Right cardiac atrium (tissue), 5 donors: ENCODE measurements at regions of chr1 and their contacts with region 1.

Region 1: DNA sequence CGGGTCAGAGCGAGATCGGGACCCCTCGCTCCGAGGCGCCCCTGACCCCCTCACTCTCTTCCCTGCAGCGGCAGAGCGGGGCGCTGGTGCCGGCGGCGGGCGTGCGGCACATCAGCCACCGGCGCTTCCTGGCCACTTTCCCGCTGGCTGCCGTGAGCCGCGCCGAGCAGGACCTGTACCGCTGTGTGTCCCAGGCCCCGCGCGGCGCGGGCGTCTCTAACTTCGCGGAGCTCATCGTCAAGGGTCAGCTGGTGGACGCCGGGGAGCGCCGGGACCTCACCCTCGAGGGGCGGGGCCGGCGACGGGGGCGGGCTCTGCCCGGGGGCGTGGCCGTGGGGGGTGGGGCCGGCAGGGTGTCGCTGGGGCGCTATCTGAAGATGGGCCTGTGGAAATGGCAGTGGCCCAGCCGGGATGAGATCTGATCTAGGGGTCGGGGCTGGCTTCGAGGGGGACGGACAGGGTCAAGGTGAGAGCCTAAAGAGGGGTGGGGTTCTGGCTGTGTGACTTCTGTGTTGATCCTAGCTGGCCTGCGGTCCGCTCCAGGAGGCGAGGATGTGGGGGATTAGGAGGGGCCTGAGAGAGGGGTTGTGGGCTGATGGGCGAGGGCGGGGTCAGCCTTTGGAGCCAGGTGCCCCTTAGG is 23.6 kb downstream of the PTPRU start:
- DNase-seq: peak; percentile 69 to 90 (median 89)
- ATAC-seq: peak; percentile 86 to 90
- H3K4me3 ChIP-seq: peak overlapping the region; percentile 37
- H3K27ac ChIP-seq: no peak overlapping the region
- H3K4me1 ChIP-seq: peaks cover 4% of the 10 kb centered on the region
- H3K27me3 ChIP-seq: no peaks in the 10 kb centered on the region

Region 2: DNA sequence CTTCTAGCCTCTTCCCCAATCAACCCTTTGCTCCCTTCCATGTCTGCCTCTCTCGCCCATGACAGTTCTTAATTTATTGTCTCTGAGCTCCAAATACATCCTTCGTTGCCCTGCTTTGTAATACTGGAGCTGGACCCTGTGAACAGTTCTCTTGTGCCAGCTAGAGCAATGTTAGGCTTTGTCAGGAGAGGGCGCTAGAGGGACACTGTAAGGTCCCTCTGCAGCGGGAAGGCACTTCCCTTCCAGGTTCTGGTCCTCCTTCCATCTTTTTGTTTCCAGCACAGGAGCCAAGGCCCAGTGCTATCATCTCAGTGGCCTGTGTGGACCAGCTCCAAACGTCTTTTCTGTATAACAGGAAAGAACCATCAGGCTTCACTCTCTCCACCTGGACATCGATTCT is 72.3 kb after region 1 on chr1:
- intact Hi-C with region 1: loop called in 1 of 4 experiments (anchors 10 kb)
- DNase-seq: no peak
- ATAC-seq: no peak
- H3K4me3 ChIP-seq: no peak overlapping the region
- H3K27ac ChIP-seq: no peak overlapping the region
- H3K4me1 ChIP-seq: no peaks in the 10 kb centered on the region
- H3K27me3 ChIP-seq: no peaks in the 10 kb centered on the region

Region 3: GRCh38 chr1:30106125-30106524 is 846.2 kb after region 1 on chr1:
- intact Hi-C with region 1: loop called in 1 of 4 experiments (anchors 10 kb)
- DNase-seq: peak in 2 of 3 donors; percentile 39 to 71
- ATAC-seq: peak in 1 of 2 donors; percentile 50
- H3K4me3 ChIP-seq: no peak overlapping the region
- H3K27ac ChIP-seq: no peak overlapping the region
- H3K4me1 ChIP-seq: no peaks in the 10 kb centered on the region
- H3K27me3 ChIP-seq: no peaks in the 10 kb centered on the region